BJ (cell line): ENCODE measurements at regions of chr16 and their contacts with region 1.

Region 1: DNA sequence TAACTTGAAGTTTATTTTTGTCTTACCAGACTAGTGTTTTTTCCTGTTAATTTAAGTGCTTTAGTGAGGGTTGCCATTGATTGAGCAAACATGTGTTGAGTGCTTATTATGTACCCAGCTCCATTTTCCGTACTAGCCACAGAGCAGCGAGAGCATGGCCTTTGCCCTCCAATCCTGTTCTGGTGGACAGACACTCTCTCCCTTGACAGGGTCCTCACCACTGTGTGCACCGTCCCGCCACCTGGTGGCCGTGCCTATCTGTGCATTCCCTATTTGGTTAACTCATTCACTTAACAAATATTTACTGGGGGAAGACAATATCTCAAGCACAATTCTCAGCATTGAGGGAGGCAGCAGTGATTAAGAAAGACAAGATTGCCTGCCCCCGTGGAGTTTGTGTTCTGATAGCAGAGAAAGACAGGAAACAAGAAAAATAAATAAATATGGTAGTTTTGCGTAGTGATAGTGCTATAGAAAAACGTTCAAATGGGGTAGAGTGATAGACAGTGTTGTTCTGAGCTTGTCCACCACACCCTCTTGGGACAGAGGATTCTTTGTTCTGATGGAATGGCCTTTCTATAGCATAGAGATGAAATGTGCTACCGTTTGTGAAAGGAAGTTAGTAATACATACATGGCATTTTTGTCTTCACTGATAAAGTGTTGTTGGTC is 13.0 kb downstream of the CDH13 start:
- DNase-seq: no peak
- H3K4me3 ChIP-seq: no peak overlapping the region
- H3K27me3 ChIP-seq: no peaks in the 10 kb centered on the region
- CTCF ChIP-seq: peak; percentile 88

Region 2: DNA sequence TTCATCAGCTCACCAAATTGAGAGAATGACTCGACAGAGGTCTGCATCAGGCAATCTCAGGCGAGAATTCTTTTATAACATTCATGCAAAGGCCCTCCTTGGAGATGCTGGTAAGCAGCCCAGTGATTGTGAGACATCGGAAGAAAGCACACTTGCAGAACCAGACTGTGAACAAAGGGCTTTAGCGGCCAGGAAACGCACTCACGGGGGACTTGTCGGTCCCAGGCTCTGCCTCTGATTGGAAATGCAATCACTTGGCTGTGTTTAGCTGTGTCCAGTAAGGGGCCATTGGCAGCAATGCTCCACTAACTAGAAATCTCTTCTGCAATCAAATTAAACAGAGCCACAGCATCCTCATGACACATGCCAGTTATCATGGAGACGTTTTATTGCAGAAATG is 239.8 kb before region 1 on chr16:
- CTCF ChIA-PET with region 1: no interaction called
- POLR2A ChIA-PET with region 1: no interaction called
- DNase-seq: no peak
- H3K4me3 ChIP-seq: no peak overlapping the region
- H3K27me3 ChIP-seq: no peaks in the 10 kb centered on the region
- CTCF ChIP-seq: no peak

Region 3: DNA sequence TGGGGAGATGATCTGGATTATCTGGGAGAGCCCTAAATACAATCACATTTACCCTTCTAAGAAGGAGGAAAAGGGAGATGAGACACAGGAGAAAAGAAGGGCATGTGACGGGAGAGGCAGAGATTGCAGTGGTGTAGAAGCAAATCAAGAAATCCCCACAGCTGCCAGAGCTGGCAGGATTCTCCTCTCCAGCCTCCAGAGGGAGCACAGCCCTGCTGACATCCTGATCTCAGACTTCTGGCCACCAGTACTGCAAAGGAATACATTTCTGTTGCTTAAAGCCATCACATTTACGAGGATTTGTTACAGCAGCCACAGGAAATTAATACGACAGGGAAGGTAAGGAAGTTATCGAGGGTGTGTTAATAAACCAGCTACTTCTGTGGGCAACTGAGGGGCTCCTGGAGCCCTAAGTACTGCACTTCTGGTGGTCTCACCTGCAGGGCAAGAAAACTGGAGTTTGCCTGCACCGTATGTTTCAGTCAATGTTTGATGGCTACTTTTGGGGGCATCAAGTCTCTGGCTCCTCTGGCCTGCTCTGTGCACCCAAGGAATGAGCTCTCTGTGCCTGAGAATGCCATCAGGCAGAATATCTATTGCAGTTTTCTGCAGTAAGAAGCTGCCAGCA is 35.9 kb before region 1 on chr16:
- CTCF ChIA-PET with region 1: interaction called, 14 read pairs
- POLR2A ChIA-PET with region 1: no interaction called
- DNase-seq: no peak
- H3K4me3 ChIP-seq: no peak overlapping the region
- H3K27me3 ChIP-seq: peaks cover 2% of the 10 kb centered on the region; the same call in 1 of the 2 replicates
- CTCF ChIP-seq: peak; percentile 83

Region 4: GRCh38 chr16:82653550-82654511 is 14.0 kb after region 1 on chr16:
- CTCF ChIA-PET with region 1: interaction called, 29 read pairs
- POLR2A ChIA-PET with region 1: no interaction called
- DNase-seq: peak; percentile 71
- H3K4me3 ChIP-seq: no peak overlapping the region
- H3K27me3 ChIP-seq: no peaks in the 10 kb centered on the region
- CTCF ChIP-seq: no peak

Region 5: GRCh38 chr16:83895239-83895638 is 1255.4 kb after region 1 on chr16:
- CTCF ChIA-PET with region 1: no interaction called
- POLR2A ChIA-PET with region 1: interaction called, 32 read pairs
- DNase-seq: no peak
- H3K4me3 ChIP-seq: no peak overlapping the region
- H3K27me3 ChIP-seq: no peaks in the 10 kb centered on the region; the same call in 1 of the 2 replicates
- CTCF ChIP-seq: no peak